ENCODE measurements at regions of chr1 and their contacts with region 1.

Region 1: DNA sequence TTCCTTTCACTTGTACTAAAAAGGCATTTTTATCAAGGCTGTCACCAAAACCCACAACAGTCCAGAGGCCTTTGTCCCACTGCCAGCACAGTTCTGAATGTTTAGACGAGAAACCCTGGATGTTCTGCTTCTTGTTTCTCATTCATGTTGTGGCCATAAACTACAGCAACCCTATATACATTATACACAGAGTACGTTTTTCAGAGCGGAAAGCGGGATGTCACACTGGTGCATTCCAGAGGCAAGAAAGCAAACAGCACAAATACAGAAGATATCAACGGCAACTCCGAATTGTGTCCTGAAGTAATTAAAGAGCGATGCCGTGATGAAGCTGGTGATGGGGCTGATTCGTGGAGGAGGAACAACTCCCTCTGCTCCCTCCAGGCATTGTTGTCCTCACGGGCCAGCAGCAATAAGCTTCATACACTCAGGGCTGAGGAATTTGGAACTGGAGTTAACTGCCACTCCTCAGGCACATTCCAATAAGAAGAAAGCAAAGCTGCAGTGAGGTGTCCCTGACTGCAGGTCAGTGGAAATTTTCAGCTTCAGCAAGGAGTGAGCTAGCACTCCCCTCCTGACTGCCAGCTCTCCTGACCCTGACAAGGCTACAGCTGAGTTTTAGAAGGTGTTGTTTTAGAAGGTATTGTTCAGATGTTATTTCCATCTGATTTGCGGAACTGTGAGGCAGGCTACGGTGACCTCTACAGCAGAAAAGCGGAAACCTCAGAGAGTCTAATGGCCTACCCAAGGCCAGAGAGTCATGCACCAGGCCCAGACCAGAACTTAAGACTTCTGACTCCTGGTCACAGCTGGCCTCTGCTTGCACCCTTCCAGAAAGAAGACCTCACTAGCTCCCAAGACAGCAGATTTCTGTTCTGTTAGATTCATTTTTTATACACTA is 149.0 kb downstream of the TGFBR3 start:
- DNase-seq: peak; percentile 77 to 86
- H3K4me3 ChIP-seq: no peak overlapping the region
- H3K4me3 Mint-ChIP-seq: peak overlapping the region; percentile 57
- H3K27ac Mint-ChIP-seq: peak overlapping the region; percentile 97
- H3K4me1 ChIP-seq: peaks cover 37% of the 10 kb centered on the region
- H3K4me1 Mint-ChIP-seq: peaks cover 29% of the 10 kb centered on the region
- H3K27me3 ChIP-seq: no peaks in the 10 kb centered on the region
- H3K27me3 Mint-ChIP-seq: no peaks in the 10 kb centered on the region
- CTCF ChIP-seq: no peak

Region 2: DNA sequence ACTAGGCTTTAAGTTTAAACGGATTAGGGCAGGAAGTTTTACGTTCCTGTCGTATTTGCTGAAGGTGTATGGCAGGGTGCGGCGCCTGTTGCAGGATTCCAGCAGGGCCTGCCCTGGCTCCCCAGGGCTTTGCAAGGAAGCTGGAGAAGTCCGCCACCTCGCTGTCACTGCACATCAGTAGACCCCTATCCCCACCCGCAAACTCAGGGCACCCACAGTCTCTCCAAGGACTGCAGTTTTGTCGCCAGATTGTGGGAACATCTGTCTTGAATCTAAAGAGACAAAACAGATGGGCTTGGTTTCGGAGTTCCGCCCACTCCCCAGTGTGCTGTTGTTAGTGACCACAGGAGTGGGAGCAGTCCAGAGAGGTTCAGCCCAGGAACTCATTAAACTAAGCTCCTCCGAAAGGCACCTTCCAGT is 125.5 kb before region 1 on chr1:
- CTCF ChIA-PET with region 1: no interaction called
- POLR2A ChIA-PET with region 1: interaction called, 5 read pairs
- intact Hi-C with region 1: loop called (anchors 2 kb)
- DNase-seq: peak; percentile 86 to 93
- H3K4me3 ChIP-seq: no peak overlapping the region
- H3K4me3 Mint-ChIP-seq: peak overlapping the region; percentile 33
- H3K27ac Mint-ChIP-seq: peak overlapping the region; percentile 95
- H3K4me1 ChIP-seq: peaks cover 47% of the 10 kb centered on the region
- H3K4me1 Mint-ChIP-seq: peaks cover 24% of the 10 kb centered on the region
- H3K27me3 ChIP-seq: no peaks in the 10 kb centered on the region
- H3K27me3 Mint-ChIP-seq: no peaks in the 10 kb centered on the region
- CTCF ChIP-seq: peak in 1 of 2 experiments; percentile 41

Region 3: DNA sequence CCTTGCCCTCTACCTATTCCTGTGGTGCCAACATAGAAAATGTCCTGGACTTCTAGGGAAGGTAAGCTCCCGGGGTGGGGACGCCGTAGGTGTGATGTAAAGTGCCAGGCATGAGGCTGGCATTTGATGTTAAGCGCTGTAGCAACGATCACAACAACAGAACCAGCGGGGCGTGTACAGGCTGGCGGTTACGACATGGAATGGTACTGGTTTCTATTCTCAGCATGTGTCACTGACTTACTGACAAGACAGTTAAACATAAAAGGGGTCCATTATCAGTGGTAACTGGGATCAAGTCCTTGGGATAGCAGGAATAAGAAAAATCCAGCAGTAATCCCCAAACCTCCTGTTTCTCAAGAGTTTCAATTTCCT is 90.1 kb after region 1 on chr1:
- CTCF ChIA-PET with region 1: no interaction called
- POLR2A ChIA-PET with region 1: no interaction called
- intact Hi-C with region 1: loop called (anchors 5 kb)
- DNase-seq: peak in 1 of 2 experiments; percentile 30
- H3K4me3 ChIP-seq: no peak overlapping the region
- H3K4me3 Mint-ChIP-seq: no peak overlapping the region
- H3K27ac Mint-ChIP-seq: peak overlapping the region; percentile 48
- H3K4me1 ChIP-seq: peaks cover 15% of the 10 kb centered on the region
- H3K4me1 Mint-ChIP-seq: no peaks in the 10 kb centered on the region
- H3K27me3 ChIP-seq: no peaks in the 10 kb centered on the region
- H3K27me3 Mint-ChIP-seq: no peaks in the 10 kb centered on the region
- CTCF ChIP-seq: no peak

Region 4: GRCh38 chr1:91885716-91886506 is 148.9 kb after region 1 on chr1 and contains the start of gene TGFBR3:
- CTCF ChIA-PET with region 1: no interaction called
- POLR2A ChIA-PET with region 1: no interaction called
- intact Hi-C with region 1: loop called (anchors 5 kb)
- DNase-seq: peak; percentile 77 to 83
- H3K4me3 ChIP-seq: peak within 1 kb of the TSS; percentile 83
- H3K4me3 Mint-ChIP-seq: peak within 1 kb of the TSS; percentile 83
- H3K27ac Mint-ChIP-seq: peak within 1 kb of the TSS; percentile 13
- H3K4me1 ChIP-seq: no peaks in the 10 kb centered on the region
- H3K4me1 Mint-ChIP-seq: peaks cover 7% of the 10 kb centered on the region
- H3K27me3 ChIP-seq: no peaks in the 10 kb centered on the region
- H3K27me3 Mint-ChIP-seq: no peaks in the 10 kb centered on the region
- CTCF ChIP-seq: peak; percentile 14 to 22
- total RNA-seq, gene TGFBR3: 12.2 and 15.2 TPM in 2 replicates

Measured in Caco-2 (cell line).